ENCODE measurements at regions of chrX and their contacts with region 1.

Region 1: GRCh38 chrX:100494646-100495370 is 84.7 kb upstream of the PCDH19 start:
- DNase-seq: no peak
- H3K4me3 ChIP-seq: no peak overlapping the region
- H3K27ac ChIP-seq: no peak overlapping the region
- H3K4me1 ChIP-seq: no peaks in the 10 kb centered on the region
- H3K27me3 ChIP-seq: peaks cover 14% of the 10 kb centered on the region; the same call in 1 of the 2 replicates
- CTCF ChIP-seq: no peak
- EP300 ChIP-seq: no peak
- RAD21 ChIP-seq: no peak

Region 2: DNA sequence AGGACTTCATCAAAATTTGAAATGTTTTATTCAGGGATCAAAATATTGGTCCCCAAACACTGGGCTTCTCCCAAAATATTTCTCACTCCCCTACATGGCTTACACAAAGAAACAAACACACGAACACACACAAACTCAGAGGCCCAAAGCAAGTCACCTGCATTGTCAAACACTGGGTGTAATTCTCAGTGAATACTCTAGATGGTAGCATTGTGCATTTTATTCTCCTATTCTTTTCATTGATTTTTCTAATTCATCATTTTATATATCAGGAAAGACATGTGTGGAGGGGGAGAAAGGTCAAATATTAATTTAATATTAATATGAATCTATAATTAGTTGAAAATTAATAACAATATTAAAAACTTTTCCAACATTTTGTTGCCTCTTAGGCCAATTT is 17.7 kb after region 1 on chrX:
- CTCF ChIA-PET with region 1: interaction called, 11 read pairs
- POLR2A ChIA-PET with region 1: no interaction called
- DNase-seq: peak; percentile 32
- H3K4me3 ChIP-seq: no peak overlapping the region
- H3K27ac ChIP-seq: no peak overlapping the region
- H3K4me1 ChIP-seq: no peaks in the 10 kb centered on the region
- H3K27me3 ChIP-seq: no peaks in the 10 kb centered on the region; the same call in 1 of the 2 replicates
- CTCF ChIP-seq: peak; percentile 62
- EP300 ChIP-seq: no peak
- RAD21 ChIP-seq: peak; percentile 54